ENCODE measurements at regions of chr1 and their contacts with region 1.

Region 1: DNA sequence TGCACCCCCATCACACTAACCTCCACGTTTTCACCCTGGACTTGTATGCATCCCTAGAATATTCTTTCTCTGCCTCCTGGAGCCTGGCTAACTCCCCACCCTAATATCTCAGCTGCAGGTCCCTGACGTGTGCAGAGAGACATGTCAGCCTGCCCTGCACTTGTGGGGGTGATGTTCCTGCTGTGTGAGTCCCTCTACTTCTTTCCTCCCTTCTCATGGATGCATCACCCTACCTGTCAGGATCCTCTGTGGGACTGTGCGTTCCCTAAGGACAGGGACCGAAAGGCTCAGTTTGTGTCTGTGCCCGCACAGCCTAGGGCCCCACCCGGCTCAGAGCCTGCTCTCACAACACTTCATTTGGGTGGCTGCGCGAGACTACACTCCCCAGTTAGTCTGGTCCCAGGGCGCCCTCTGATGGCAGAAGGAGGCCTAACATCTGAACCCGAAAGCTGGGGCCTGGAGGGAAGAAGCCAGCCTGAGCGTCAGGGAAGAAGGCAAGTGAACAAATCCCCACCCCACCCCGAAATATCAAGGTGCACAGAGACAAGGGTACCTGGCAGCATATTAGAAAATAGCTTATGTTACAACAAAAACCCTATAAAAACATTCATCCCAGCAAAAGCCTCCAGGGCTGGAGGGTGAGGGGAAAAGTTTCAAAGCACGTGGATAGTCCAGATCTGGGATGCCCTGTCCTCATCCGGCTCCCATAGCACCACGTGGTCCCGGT is 3.7 kb downstream of the CD52 start:
- DNase-seq: peak; percentile 91 to 99 (median 93)
- ATAC-seq: peak; percentile 73
- H3K4me3 ChIP-seq: peak overlapping the region; percentile 87 to 93
- H3K4me3 Mint-ChIP-seq: peak overlapping the region; percentile 88
- H3K27ac ChIP-seq: peak overlapping the region in 1 of 2 experiments; percentile 46
- H3K27ac Mint-ChIP-seq: peak overlapping the region; percentile 96
- H3K4me1 ChIP-seq: peaks cover 41% of the 10 kb centered on the region
- H3K4me1 Mint-ChIP-seq: peaks cover 53% of the 10 kb centered on the region
- H3K27me3 ChIP-seq: no peaks in the 10 kb centered on the region
- H3K27me3 Mint-ChIP-seq: no peaks in the 10 kb centered on the region
- CTCF ChIP-seq: peak; percentile 86

Region 2: DNA sequence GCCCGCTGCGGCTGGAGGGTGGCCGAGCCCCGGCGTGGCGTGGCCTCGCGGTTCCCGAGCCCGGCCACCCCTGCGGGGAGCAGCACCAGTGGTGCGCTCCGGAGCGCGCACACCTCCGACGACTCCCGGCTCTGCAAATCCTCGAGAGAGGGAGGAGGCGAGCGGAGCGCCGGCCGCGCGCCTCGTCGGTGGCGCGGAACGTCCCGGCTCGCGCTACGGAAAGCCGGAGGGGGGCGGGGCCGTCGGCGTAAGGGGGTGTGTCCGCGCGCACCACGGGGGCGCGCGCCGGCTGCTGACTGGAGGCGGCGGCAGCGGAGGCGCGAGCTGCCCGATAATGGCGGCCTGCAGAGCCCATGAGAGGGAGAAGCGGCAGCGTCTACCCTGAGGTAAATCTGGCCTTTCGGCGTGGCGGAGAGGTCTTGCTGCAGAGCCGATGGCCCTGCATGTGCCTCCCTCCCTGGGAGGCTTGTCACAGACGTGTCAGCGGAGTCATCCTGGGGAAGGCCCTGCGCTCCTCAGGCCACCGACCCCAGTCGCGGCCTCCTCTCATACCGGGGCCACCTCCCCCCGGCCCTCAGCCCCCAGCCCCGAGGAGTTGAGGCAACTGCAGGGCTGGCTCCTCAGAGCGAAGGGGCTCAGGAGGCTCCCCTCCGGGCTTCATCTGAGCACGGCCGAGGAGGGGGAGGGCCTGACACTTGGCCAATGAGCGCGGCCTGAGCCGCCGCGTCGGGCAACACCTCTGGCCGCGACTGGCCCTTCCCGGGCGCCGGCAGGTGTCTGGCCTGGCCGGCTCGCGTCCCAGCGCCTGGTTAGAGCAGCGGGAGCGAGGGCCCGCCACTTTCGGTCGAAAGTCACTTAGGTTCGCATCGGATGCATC is 209.7 kb before region 1 on chr1 and contains the start of gene PDIK1L:
- CTCF ChIA-PET with region 1: no interaction called
- POLR2A ChIA-PET with region 1: no interaction called
- intact Hi-C with region 1: loop called (anchors 2 to 5 kb)
- DNase-seq: peak; percentile 92 to 98 (median 94)
- ATAC-seq: peak; percentile 87
- H3K4me3 ChIP-seq: peak within 1 kb of the TSS; percentile 98 to 99
- H3K4me3 Mint-ChIP-seq: peak within 1 kb of the TSS; percentile 92
- H3K27ac ChIP-seq: peak within 1 kb of the TSS; percentile 65 to 79
- H3K27ac Mint-ChIP-seq: peak within 1 kb of the TSS; percentile 91
- H3K4me1 ChIP-seq: peaks cover 19% of the 10 kb centered on the region
- H3K4me1 Mint-ChIP-seq: peaks cover 30% of the 10 kb centered on the region
- H3K27me3 ChIP-seq: no peaks in the 10 kb centered on the region
- H3K27me3 Mint-ChIP-seq: no peaks in the 10 kb centered on the region
- CTCF ChIP-seq: no peak
- total RNA-seq, gene PDIK1L: 10.2 to 10.8 TPM

Region 3: DNA sequence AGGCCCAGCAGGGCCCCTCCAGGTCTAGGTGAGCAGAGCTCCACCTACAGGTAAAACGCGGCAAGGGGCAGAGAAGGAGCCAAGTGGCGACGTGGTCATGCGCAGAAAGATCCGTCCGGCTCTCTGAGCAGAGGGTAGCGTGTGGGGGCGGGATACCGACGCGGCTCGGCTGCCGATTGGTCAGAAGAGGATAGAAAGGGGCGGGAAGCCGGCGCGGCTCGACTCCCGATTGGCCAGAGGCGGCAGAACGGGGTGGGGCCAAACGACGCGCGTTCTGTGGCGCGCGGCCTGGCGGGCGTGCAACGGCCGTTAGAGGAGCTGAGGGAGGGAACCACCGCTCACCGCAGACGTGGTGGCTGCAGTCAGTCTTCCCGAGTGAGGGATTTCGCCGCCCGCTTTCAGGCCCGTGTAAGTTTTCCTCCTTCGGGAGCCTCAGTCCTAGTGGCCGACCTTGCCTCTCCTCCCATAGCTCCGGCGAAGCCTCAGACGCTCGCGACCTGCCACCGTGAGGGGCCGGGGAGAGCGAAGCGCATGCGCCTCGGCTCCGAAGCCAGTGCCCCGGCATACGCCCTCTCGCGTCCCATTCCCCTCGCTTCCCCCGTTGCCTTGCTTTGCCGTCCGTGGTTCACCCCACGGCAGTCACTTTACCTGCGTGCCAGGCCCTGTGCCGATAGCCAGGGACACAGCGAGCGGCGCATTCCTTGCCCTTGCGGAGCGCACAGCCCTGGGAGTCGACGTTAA is 87.4 kb before region 1 on chr1 and contains the start of gene CEP85:
- CTCF ChIA-PET with region 1: interaction called, 21 read pairs
- POLR2A ChIA-PET with region 1: interaction called, 14 read pairs
- intact Hi-C with region 1: loop called (anchors 1 kb)
- DNase-seq: peak; percentile 96 to 99 (median 99)
- ATAC-seq: peak; percentile 90
- H3K4me3 ChIP-seq: peak within 1 kb of the TSS; percentile 87 to 95
- H3K4me3 Mint-ChIP-seq: peak within 1 kb of the TSS; percentile 99
- H3K27ac ChIP-seq: peak within 1 kb of the TSS; percentile 81 to 85
- H3K27ac Mint-ChIP-seq: peak within 1 kb of the TSS; percentile 95
- H3K4me1 ChIP-seq: peaks cover 17% of the 10 kb centered on the region
- H3K4me1 Mint-ChIP-seq: peaks cover 36% of the 10 kb centered on the region
- H3K27me3 ChIP-seq: no peaks in the 10 kb centered on the region
- H3K27me3 Mint-ChIP-seq: no peaks in the 10 kb centered on the region
- CTCF ChIP-seq: peak; percentile 72
- total RNA-seq, gene CEP85: 7.1 TPM

Region 4: GRCh38 chr1:26284597-26285360 is 36.7 kb before region 1 on chr1:
- CTCF ChIA-PET with region 1: interaction called, 844 read pairs
- POLR2A ChIA-PET with region 1: interaction called, 666 read pairs
- intact Hi-C with region 1: loop called (anchors 1 to 2 kb)
- DNase-seq: peak; percentile 82 to 98 (median 94)
- ATAC-seq: peak; percentile 72
- H3K4me3 ChIP-seq: peak overlapping the region; percentile 27 to 28
- H3K4me3 Mint-ChIP-seq: peak overlapping the region; percentile 82
- H3K27ac ChIP-seq: peak overlapping the region; percentile 61 to 76
- H3K27ac Mint-ChIP-seq: peak overlapping the region; percentile 100
- H3K4me1 ChIP-seq: peaks cover 93% of the 10 kb centered on the region
- H3K4me1 Mint-ChIP-seq: peaks cover 92% of the 10 kb centered on the region
- H3K27me3 ChIP-seq: no peaks in the 10 kb centered on the region
- H3K27me3 Mint-ChIP-seq: no peaks in the 10 kb centered on the region
- CTCF ChIP-seq: peak; percentile 46

Region 5: DNA sequence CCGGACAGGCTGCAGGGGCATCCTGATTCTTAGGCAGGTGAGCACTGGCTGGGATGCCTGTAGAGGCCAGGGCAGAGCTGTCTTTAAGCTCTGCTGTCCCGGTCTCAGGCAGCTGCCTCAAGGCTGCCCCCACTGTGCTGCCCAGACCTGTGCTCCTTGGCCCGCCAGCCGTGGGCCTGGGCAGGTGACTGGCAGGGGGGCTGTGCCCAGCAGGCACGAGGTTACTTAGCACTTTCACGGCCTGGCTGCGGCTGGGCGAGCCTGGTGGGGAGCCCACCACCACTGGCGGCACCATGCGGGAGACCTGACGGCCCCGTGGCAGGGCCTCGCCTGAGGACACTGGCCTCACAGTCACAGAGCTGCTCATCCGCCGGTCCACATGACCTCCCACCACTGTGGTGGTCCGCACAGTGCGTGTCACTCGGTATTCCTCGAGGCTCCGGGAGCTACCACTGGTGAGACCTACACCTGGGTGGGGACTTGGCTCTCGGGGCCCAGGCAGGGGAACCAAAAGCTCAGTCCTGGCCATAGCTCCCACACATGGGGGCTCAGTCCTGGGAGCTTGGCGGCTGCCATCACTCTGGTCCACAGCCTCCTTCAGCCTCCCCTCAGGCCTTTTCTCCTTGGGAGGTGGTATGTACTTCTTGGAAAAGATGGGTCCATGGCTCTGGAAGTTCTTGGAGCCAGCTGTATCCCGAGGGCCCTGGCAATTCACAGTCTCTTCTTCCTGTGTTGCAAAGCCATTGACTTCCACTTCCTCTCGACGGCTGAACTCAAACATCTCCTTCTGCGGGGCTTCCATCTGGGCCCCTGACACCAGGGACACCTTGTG is 24.5 kb after region 1 on chr1:
- CTCF ChIA-PET with region 1: interaction called, 10 read pairs
- POLR2A ChIA-PET with region 1: no interaction called
- intact Hi-C with region 1: no loop called
- DNase-seq: no peak
- ATAC-seq: no peak
- H3K4me3 ChIP-seq: no peak overlapping the region
- H3K4me3 Mint-ChIP-seq: no peak overlapping the region
- H3K27ac ChIP-seq: no peak overlapping the region
- H3K27ac Mint-ChIP-seq: no peak overlapping the region
- H3K4me1 ChIP-seq: no peaks in the 10 kb centered on the region
- H3K4me1 Mint-ChIP-seq: no peaks in the 10 kb centered on the region
- H3K27me3 ChIP-seq: peaks cover 0 to 2% of the 10 kb centered on the region in 2 experiments
- H3K27me3 Mint-ChIP-seq: no peaks in the 10 kb centered on the region
- CTCF ChIP-seq: no peak

Region 6: GRCh38 chr1:26378088-26378878 is 56.8 kb after region 1 on chr1:
- CTCF ChIA-PET with region 1: interaction called, 9 read pairs
- POLR2A ChIA-PET with region 1: interaction called, 16 read pairs
- intact Hi-C with region 1: loop called in 1 of 2 experiments (anchors 5 kb)
- DNase-seq: peak; percentile 63 to 96 (median 85)
- ATAC-seq: peak; percentile 91
- H3K4me3 ChIP-seq: peak overlapping the region; percentile 7 to 19
- H3K4me3 Mint-ChIP-seq: peak overlapping the region; percentile 59
- H3K27ac ChIP-seq: peak overlapping the region; percentile 54 to 76
- H3K27ac Mint-ChIP-seq: peak overlapping the region; percentile 91
- H3K4me1 ChIP-seq: peaks cover 65% of the 10 kb centered on the region
- H3K4me1 Mint-ChIP-seq: peaks cover 68% of the 10 kb centered on the region
- H3K27me3 ChIP-seq: no peaks in the 10 kb centered on the region
- H3K27me3 Mint-ChIP-seq: no peaks in the 10 kb centered on the region
- CTCF ChIP-seq: no peak

Region 7: GRCh38 chr1:26417111-26417759 is 95.8 kb after region 1 on chr1:
- CTCF ChIA-PET with region 1: interaction called, 19 read pairs
- POLR2A ChIA-PET with region 1: interaction called, 7 read pairs
- intact Hi-C with region 1: loop called in 1 of 2 experiments (anchors 2 kb)
- DNase-seq: peak; percentile 70 to 92 (median 85)
- ATAC-seq: peak; percentile 100
- H3K4me3 ChIP-seq: no peak overlapping the region
- H3K4me3 Mint-ChIP-seq: no peak overlapping the region
- H3K27ac ChIP-seq: no peak overlapping the region
- H3K27ac Mint-ChIP-seq: no peak overlapping the region
- H3K4me1 ChIP-seq: no peaks in the 10 kb centered on the region
- H3K4me1 Mint-ChIP-seq: no peaks in the 10 kb centered on the region
- H3K27me3 ChIP-seq: peaks cover 4 to 8% of the 10 kb centered on the region in 2 experiments
- H3K27me3 Mint-ChIP-seq: peaks cover 17% of the 10 kb centered on the region
- CTCF ChIP-seq: peak; percentile 79

Region 8: DNA sequence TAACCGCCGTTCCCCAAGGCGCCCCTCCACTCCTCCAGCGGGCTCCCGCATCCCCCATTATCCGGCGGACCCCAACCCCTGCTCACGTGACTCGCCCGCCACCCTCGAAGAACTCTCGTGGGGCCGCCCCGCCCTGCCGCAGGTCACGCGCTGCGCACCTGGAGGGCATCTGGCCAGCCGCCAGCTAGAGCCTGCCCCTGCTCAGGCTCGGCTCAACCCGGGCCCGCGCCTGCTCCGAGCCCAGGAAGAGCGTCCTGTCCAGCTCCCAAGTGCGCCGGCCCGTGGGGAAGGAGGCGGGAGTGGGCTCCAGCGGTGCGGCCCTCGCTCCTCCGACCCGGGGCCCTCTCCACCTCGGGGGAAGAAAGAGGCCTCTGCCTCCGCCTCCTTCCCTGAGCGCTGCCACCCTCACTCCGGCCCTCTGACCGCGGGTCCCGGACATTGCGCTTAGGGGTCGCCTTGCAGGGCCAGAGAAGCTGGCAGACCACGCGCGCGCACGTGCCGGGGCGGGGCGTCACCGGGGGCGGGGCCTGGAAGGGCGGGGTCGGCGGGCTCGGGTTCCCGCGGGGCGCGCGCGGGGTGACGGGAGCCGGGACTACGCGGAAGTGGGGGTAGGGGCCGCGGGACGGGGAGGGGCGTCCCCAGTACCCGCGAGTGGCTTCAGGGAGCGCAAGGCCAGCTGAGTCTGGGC is 179.2 kb after region 1 on chr1:
- CTCF ChIA-PET with region 1: no interaction called
- POLR2A ChIA-PET with region 1: no interaction called
- intact Hi-C with region 1: no loop called
- DNase-seq: peak; percentile 74 to 95 (median 89)
- ATAC-seq: peak; percentile 75
- H3K4me3 ChIP-seq: peak overlapping the region; percentile 67 to 96
- H3K4me3 Mint-ChIP-seq: peak overlapping the region; percentile 84
- H3K27ac ChIP-seq: peak overlapping the region; percentile 84 to 89
- H3K27ac Mint-ChIP-seq: peak overlapping the region; percentile 89
- H3K4me1 ChIP-seq: peaks cover 13% of the 10 kb centered on the region
- H3K4me1 Mint-ChIP-seq: peaks cover 15% of the 10 kb centered on the region
- H3K27me3 ChIP-seq: no peaks in the 10 kb centered on the region
- H3K27me3 Mint-ChIP-seq: no peaks in the 10 kb centered on the region
- CTCF ChIP-seq: peak; percentile 15